ENCODE measurements at regions of chr18 and their contacts with region 1.

Region 1: GRCh38 chr18:864872-865273 is 39.8 kb upstream of the ADCYAP1 start:
- DNase-seq: peak; percentile 73
- ATAC-seq: peak; percentile 99
- H3K4me3 ChIP-seq: no peak overlapping the region
- H3K27ac ChIP-seq: no peak overlapping the region
- H3K4me1 ChIP-seq: peaks cover 0 to 5% of the 10 kb centered on the region in 2 experiments; a peak in 2 of 4 replicates
- H3K27me3 ChIP-seq: no peaks in the 10 kb centered on the region
- CTCF ChIP-seq: peak; percentile 81 to 99 (median 98)
- POLR2A ChIP-seq: no peak
- RAD21 ChIP-seq: peak; percentile 96

Region 2: DNA sequence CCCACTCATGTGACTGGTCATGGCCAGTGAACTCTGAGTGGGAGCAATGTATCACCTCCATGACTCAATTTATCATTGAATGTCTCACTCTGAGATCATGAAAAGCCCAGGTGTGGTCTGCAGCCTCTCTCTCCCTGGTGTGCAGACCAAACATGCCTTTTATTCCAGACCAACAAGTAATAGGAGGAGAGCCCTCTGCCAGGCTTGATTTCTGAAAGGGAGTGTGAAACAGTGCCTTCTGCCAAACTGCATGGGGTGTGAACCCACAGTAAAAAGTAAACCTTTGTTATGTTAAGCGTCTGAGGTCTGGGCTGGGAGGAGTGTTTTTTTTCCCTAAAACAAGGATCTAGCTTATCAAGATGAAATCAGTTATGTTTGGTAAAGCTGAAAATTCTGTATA is 641.0 kb after region 1 on chr18:
- CTCF ChIA-PET with region 1: no interaction called
- POLR2A ChIA-PET with region 1: no interaction called
- RAD21 ChIA-PET with region 1: no interaction called
- intact Hi-C with region 1: loop called (anchors 2 kb)
- DNase-seq: no peak
- ATAC-seq: no peak
- H3K4me3 ChIP-seq: no peak overlapping the region
- H3K27ac ChIP-seq: no peak overlapping the region
- H3K4me1 ChIP-seq: no peaks in the 10 kb centered on the region
- H3K27me3 ChIP-seq: no peaks in the 10 kb centered on the region; the same call in 1 of the 2 replicates
- CTCF ChIP-seq: no peak
- POLR2A ChIP-seq: no peak
- RAD21 ChIP-seq: no peak

Region 3: GRCh38 chr18:1559563-1559962 is 694.7 kb after region 1 on chr18:
- CTCF ChIA-PET with region 1: no interaction called
- POLR2A ChIA-PET with region 1: no interaction called
- RAD21 ChIA-PET with region 1: no interaction called
- intact Hi-C with region 1: no loop called
- DNase-seq: no peak
- ATAC-seq: peak; percentile 57
- H3K4me3 ChIP-seq: no peak overlapping the region
- H3K27ac ChIP-seq: no peak overlapping the region
- H3K4me1 ChIP-seq: no peaks in the 10 kb centered on the region
- H3K27me3 ChIP-seq: peaks cover 7% of the 10 kb centered on the region; the same call in 1 of the 2 replicates
- CTCF ChIP-seq: no peak
- POLR2A ChIP-seq: no peak
- RAD21 ChIP-seq: no peak

Region 4: GRCh38 chr18:1658908-1659566 is 794.2 kb after region 1 on chr18:
- CTCF ChIA-PET with region 1: interaction called, 4 read pairs
- POLR2A ChIA-PET with region 1: no interaction called
- RAD21 ChIA-PET with region 1: no interaction called
- intact Hi-C with region 1: loop called (anchors 10 kb)
- DNase-seq: no peak
- ATAC-seq: no peak
- H3K4me3 ChIP-seq: no peak overlapping the region
- H3K27ac ChIP-seq: no peak overlapping the region
- H3K4me1 ChIP-seq: no peaks in the 10 kb centered on the region
- H3K27me3 ChIP-seq: peaks cover 8% of the 10 kb centered on the region; the same call in 1 of the 2 replicates
- CTCF ChIP-seq: no peak
- POLR2A ChIP-seq: no peak
- RAD21 ChIP-seq: no peak

Region 5: DNA sequence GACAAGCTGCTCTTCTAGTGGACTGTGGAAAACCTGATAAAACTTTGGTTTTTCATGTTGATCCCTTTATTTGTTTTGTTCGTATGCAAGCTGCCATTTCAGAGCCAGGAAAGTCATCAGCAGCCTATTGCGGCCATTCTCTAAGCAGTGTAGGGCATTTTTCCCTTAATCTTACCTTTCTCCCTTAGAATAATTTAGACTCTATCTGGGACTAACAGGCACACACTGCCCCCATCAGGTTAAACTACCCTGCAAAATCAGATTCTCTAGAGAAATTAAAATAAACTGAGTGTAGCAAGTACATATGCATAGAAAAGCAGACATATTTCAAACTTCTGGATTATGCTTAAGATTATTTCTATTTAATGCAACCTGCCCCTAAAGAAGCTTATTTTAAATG is 1359.0 kb after region 1 on chr18:
- CTCF ChIA-PET with region 1: no interaction called
- POLR2A ChIA-PET with region 1: no interaction called
- RAD21 ChIA-PET with region 1: no interaction called
- intact Hi-C with region 1: loop called (anchors 5 kb)
- DNase-seq: peak; percentile 15
- ATAC-seq: peak; percentile 67
- H3K4me3 ChIP-seq: no peak overlapping the region
- H3K27ac ChIP-seq: no peak overlapping the region
- H3K4me1 ChIP-seq: no peaks in the 10 kb centered on the region
- H3K27me3 ChIP-seq: no peaks in the 10 kb centered on the region
- CTCF ChIP-seq: peak; percentile 40 to 61 (median 49); a peak in 5 of 6 replicates
- POLR2A ChIP-seq: no peak
- RAD21 ChIP-seq: peak; percentile 75

Measured in HCT116 (cell line).